PC-3 (cell line): ENCODE measurements at regions of chr15 and their contacts with region 1.

Region 1: DNA sequence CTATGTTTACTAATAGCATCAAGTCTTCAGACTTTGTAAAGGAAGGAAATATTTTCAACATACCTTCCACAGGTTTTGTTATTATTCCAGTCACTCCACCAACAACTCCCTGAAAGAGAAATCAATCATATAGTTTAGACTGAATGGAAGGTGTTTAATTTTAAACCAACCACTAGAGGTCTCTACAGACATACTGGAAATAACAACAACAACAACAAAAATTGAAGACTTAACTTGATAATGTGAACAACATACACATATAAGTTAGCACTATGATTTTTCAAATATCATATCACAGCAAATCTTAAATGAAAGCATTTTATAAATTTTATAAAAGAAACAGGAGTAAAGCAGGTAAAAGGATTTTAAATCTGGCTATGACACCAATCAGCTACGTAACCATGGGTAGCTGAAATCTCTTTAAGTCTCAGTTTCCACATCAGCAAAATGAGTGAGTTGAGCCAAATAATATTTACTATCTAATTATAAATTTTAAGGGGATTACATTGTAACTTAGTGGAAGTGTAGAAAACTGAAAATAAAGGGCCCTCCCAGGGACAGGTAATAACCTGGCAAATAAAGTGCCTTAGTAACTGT is 188.2 kb downstream of the VPS13C start:
- DNase-seq: peak; percentile 45
- ATAC-seq: no peak; the same call in 1 of the 2 replicates
- H3K4me3 ChIP-seq: no peak overlapping the region
- H3K27ac ChIP-seq: no peak overlapping the region
- H3K4me1 ChIP-seq: no peaks in the 10 kb centered on the region
- H3K27me3 ChIP-seq: no peaks in the 10 kb centered on the region
- CTCF ChIP-seq: peak; percentile 78

Region 2: DNA sequence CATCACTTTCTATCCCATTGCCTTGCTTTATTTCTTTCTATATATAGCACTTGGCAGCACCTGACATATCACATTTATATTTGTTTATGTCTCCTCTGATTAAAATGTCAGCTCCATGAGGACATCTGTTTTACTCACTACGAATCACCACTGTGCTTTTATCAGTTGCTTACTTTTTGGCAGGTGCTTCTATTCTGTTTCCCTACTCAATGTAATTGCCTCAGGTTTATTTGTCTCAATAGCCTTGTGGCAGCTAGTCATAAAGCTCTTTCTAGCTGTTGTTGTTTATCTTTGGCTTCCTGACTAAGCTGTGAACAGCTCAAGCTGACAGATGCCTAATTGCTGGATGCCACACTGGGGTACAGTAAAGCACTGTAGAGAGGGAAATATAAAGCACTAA is 102.7 kb after region 1 on chr15:
- CTCF ChIA-PET with region 1: no interaction called
- POLR2A ChIA-PET with region 1: no interaction called
- intact Hi-C with region 1: loop called (anchors 10 kb)
- DNase-seq: peak; percentile 48
- ATAC-seq: peak; percentile 86
- H3K4me3 ChIP-seq: no peak overlapping the region
- H3K27ac ChIP-seq: no peak overlapping the region
- H3K4me1 ChIP-seq: peaks cover 6% of the 10 kb centered on the region; the same call in 1 of the 2 replicates
- H3K27me3 ChIP-seq: no peaks in the 10 kb centered on the region
- CTCF ChIP-seq: no peak

Region 3: DNA sequence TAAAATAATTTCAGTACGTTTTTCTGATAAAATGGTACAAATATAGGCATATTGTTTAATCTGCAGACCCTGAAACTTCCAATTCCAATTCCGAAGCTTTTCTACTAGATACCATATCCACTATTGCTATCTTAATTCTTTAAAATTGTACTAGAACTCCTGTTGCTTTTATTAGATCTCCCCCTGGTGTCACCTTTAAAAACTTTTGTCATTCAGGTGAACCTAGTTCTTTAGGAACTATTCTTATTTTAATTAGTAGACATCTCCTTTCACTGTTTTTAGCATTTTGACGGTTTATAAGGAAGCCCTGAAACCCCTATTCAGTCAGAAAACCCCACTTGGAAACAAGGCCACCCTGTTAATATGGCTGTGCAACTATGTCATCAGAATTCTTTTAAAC is 270.7 kb after region 1 on chr15:
- CTCF ChIA-PET with region 1: no interaction called
- POLR2A ChIA-PET with region 1: no interaction called
- intact Hi-C with region 1: loop called (anchors 1 kb)
- DNase-seq: peak; percentile 38
- ATAC-seq: no peak
- H3K4me3 ChIP-seq: no peak overlapping the region
- H3K27ac ChIP-seq: no peak overlapping the region
- H3K4me1 ChIP-seq: peaks cover 20% of the 10 kb centered on the region
- H3K27me3 ChIP-seq: no peaks in the 10 kb centered on the region
- CTCF ChIP-seq: peak; percentile 68